Activated CD8-positive, alpha-beta T cell treated with anti-CD3 and anti-CD28 coated beads, Interleukin-2, amount 10 ng/mL, durations not matched to agents 7 days and 5 days (primary cell): ENCODE measurements at regions of chr2 and their contacts with region 1.

Region 1: DNA sequence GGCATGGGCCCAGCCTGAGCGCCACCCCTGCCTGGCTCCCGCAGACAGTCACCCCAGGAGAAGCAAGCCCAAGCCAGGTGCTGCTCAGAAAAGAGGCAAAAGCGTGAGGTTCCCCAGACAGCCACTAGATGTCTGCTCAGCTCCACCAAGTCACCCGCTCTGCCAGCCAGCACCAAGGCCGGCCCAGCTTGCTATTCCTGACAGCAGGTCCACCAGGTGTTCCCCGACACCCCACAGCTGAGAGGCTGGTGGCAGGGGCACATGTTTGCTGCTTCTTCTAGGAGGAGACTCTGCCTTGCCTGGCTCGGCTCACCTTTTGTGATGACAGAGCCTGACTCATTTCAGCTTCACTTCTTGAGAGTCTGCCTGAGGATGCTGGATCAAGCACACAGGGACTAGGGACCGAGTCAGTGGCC is 206.7 kb downstream of the MGAT5 start:
- DNase-seq: peak; percentile 54
- ATAC-seq: peak; percentile 52
- H3K4me3 Mint-ChIP-seq: no peak overlapping the region
- H3K27ac Mint-ChIP-seq: no peak overlapping the region
- H3K4me1 Mint-ChIP-seq: no peaks in the 10 kb centered on the region
- H3K27me3 Mint-ChIP-seq: no peaks in the 10 kb centered on the region

Region 2: DNA sequence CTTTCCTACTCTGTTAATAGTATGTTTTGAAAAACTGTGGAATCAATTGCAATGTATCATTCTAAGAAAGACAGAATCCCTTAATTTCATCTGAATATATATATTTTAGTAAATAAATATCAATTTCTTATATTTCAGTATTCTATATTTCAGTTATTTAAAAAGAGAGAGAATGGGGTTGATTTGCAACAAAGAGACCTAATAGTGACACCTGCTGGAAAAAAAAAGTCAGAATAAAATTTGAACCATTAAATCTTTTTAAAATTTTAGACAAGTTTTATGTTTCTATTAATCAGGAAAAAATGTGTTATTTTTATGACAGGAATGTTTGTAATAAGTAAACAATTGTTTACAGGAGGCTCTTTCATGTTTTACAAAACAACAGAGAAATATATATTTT is 437.3 kb after region 1 on chr2:
- CTCF ChIA-PET with region 1: interaction called, 10 read pairs
- POLR2A ChIA-PET with region 1: no interaction called
- DNase-seq: no peak
- ATAC-seq: no peak
- H3K4me3 Mint-ChIP-seq: no peak overlapping the region
- H3K27ac Mint-ChIP-seq: no peak overlapping the region
- H3K4me1 Mint-ChIP-seq: no peaks in the 10 kb centered on the region
- H3K27me3 Mint-ChIP-seq: peaks cover 6% of the 10 kb centered on the region